ENCODE measurements at regions of chr14 and their contacts with region 1.

Region 1: DNA sequence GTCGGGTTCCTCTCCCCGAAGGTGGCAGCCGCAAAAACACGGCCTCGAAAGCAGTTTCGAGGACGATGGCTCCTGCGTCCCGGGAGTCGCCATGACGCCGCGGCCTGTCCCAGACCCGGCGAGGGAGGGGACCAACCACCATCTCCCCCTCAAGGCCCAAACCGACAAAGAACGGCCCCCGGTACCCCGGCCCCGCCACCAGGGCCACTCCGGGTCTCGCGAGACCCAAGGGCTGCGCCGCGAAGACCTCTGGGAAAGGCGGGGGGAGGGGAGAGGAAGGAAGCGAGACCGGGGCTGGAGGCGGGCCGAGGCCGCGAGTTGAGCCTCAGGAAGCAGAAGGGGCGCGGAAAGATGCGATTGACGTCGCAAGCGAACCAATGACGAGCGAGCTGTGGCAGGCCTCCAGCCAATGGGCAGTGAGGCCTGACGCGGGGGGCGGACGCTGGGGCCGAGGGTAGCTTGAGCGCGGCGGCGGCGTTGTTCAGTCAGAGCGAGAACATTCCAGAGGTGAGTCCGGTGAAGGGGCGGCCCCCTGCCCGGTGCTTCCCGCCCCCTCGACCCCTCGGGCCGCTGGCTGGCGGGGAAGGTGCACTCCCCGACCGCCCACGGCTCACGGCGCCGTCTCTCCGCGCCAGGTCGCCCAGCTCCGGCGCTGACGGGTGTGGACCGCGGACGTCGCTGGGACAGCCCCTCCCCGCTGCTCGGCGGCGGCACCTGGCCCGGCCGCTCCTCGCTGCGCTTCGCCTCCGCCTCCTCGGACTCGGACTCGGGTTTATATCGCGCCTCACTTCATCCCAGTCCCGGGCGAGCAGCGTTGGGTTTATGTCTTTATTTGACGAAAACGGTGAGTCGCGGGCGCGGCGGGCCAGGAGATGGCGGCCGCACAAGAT is at the start of gene EIF5:
- DNase-seq: peak; percentile 99
- H3K4me3 ChIP-seq: peak within 1 kb of the TSS; percentile 82 to 95 (median 88)
- H3K27ac ChIP-seq: peak within 1 kb of the TSS; percentile 99 to 100 (median 99)
- H3K4me1 ChIP-seq: peaks cover 8 to 40% (median 21%) of the 10 kb centered on the region in 4 donors
- H3K27me3 ChIP-seq: no peaks in the 10 kb centered on the region
- CTCF ChIP-seq: peak in 4 of 5 experiments; percentile 30 to 94 (median 64)
- EP300 ChIP-seq: no peak
- POLR2A ChIP-seq: peak; percentile 100
- total RNA-seq, gene EIF5: 210 to 312 (median 266) TPM

Region 2: DNA sequence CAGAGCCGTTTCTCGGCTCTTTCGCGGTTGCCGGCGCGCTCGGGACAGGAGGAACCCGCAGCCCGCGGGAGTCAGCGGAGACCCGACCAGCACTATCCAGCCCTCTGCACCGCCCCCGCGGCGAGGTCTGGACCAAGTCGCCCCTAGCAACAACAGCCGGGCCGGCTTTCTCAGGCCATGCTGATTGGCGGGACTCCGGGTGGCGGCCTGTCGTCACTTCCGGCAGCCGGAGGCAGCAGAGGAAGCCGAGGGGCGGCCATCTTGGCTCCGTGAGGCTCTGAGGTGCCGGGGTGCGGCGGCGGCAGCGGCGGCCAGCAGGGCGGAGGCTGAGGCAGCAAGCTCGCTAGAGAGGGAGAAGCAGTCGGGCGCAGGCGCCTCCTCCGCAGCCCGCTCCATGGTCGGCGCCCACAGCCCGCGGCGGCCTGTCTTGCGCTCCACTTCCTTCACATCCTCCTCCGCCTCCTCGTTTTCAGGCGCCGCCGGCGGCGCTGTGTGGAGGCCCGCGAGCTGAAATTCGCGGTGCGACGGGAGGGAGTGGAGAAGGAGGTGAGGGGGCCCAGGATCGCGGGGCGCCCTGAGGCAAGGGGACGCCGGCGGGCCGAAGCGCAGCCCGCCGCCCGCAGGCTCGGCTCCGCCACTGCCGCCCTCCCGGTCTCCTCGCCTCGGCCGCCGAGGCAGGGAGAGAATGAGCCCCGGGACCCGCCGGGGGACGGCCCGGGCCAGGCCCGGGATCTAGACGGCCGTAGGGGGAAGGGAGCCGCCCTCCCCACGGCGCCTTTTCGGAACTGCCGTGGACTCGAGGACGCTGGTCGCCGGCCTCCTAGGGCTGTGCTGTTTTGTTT is 51.4 kb after region 1 on chr14 and contains the start of gene MARK3:
- in situ Hi-C with region 1: loop called in 1 of 4 experiments (anchors 10 kb)
- intact Hi-C with region 1: no loop called
- DNase-seq: peak; percentile 98
- H3K4me3 ChIP-seq: peak within 1 kb of the TSS; percentile 78 to 97 (median 94)
- H3K27ac ChIP-seq: peak within 1 kb of the TSS; percentile 98 to 100 (median 100)
- H3K4me1 ChIP-seq: peaks cover 25 to 36% (median 29%) of the 10 kb centered on the region in 4 donors
- H3K27me3 ChIP-seq: no peaks in the 10 kb centered on the region
- CTCF ChIP-seq: peak; percentile 17 to 54 (median 30)
- EP300 ChIP-seq: no peak
- POLR2A ChIP-seq: peak; percentile 88
- total RNA-seq, gene MARK3: 61.3 to 98.0 (median 78.8) TPM

Measured in transverse colon (tissue), 4 donors.